ENCODE measurements at regions of chr7 and their contacts with region 1.

Region 1: DNA sequence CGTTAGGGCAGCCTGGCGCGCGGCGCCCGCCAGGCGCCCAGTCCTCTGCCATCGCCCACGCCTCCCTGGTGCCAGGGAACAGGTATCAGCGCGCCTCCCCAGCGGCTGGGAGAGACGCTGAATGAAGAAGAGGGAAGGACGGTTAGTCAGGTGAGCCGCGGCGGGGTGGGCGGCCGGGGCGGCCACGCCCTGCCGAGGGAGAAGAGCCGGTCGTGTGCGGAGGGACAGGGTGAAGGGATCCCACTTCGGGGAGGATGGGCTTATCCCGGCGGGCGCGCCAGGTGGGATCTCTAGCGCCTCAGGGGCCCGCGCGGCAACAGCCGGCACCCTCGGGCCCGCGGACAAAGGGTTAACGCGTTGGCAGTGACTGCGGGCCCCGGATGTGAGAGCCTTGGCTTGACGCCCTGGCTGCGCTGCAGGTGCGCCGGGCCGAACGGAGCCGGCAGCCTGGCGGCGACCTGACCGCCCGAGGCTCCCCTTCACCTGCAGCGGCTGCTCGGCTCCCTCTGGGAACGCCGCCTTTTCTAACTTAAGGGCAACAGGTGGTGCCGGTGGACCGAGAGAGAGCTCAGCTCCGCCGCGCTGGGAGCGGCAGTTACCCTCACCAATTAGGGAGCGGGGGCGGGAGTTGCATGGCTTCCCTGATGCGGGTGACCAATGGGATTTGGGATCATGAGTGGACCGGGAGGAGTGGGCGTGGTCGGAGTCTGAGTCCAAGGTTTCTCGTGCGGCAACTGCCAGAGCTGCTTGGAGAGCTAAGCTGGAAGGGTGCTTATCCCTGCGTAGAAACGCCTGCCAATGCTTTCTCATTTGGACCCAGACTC is at the start of gene ARL4A:
- DNase-seq: peak; percentile 89
- H3K4me3 Mint-ChIP-seq: peak within 1 kb of the TSS; percentile 94
- H3K27ac Mint-ChIP-seq: peak within 1 kb of the TSS; percentile 98
- H3K4me1 Mint-ChIP-seq: peaks cover 33% of the 10 kb centered on the region
- H3K27me3 Mint-ChIP-seq: peaks cover 5% of the 10 kb centered on the region
- total RNA-seq, gene ARL4A: 13.8 and 14.8 TPM in 2 replicates

Region 2: GRCh38 chr7:12715372-12716133 is 28.4 kb after region 1 on chr7:
- intact Hi-C with region 1: loop called (anchors 2 kb)
- DNase-seq: peak; percentile 17
- H3K4me3 Mint-ChIP-seq: no peak overlapping the region
- H3K27ac Mint-ChIP-seq: no peak overlapping the region
- H3K4me1 Mint-ChIP-seq: peaks cover 28% of the 10 kb centered on the region
- H3K27me3 Mint-ChIP-seq: no peaks in the 10 kb centered on the region

Region 3: GRCh38 chr7:12796397-12797127 is 109.5 kb after region 1 on chr7:
- intact Hi-C with region 1: loop called (anchors 5 kb)
- DNase-seq: no peak
- H3K4me3 Mint-ChIP-seq: no peak overlapping the region
- H3K27ac Mint-ChIP-seq: no peak overlapping the region
- H3K4me1 Mint-ChIP-seq: peaks cover 15% of the 10 kb centered on the region
- H3K27me3 Mint-ChIP-seq: peaks cover 2% of the 10 kb centered on the region

Region 4: GRCh38 chr7:13099154-13099795 is 412.2 kb after region 1 on chr7:
- intact Hi-C with region 1: loop called (anchors 10 kb)
- DNase-seq: no peak
- H3K4me3 Mint-ChIP-seq: no peak overlapping the region
- H3K27ac Mint-ChIP-seq: no peak overlapping the region
- H3K4me1 Mint-ChIP-seq: peaks cover 5% of the 10 kb centered on the region
- H3K27me3 Mint-ChIP-seq: no peaks in the 10 kb centered on the region